A549 (cell line): ENCODE measurements at regions of chr16 and their contacts with region 1.

Region 1: DNA sequence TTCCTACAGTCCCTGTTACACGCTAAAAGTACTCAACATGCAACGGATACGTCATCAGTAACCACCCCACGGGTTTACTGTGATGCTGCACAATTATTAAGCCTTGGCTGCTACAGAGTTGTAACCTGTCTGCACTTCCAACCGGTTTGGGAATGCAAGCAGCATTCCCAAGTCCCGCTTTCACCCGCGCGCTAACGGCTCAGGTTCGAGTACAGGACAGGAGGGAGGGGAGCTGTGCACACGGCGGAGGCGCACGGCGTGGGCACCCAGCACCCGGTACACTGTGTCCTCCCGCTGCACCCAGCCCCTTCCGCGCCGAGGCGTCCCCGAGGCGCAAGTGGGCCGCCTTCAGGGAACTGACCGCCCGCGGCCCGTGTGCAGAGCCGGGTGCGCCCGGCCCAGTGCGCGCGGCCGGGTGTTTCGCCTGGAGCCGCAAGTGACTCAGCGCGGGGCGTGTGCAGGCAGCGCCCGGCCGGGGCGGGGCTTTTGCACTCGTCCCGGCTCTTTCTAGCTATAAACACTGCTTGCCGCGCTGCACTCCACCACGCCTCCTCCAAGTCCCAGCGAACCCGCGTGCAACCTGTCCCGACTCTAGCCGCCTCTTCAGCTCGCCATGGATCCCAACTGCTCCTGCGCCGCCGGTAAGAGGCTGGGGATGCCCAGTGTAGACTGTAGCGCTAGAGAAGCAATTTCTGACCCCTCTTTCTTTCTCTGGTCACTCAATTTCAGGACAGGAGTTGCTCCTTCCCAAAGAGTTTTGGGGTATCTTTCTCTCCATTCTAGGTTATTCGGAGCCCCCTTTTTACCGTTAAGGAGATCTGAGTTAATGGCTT is at the start of gene MT2A:
- DNase-seq: peak; percentile 92 to 97
- ATAC-seq: peak; percentile 67 to 83
- H3K4me3 ChIP-seq: peak within 1 kb of the TSS; percentile 61
- H3K27ac ChIP-seq: peak within 1 kb of the TSS; percentile 93 to 96
- H3K4me1 ChIP-seq: peaks cover 66% of the 10 kb centered on the region
- CTCF ChIP-seq: no peak
- EP300 ChIP-seq: no peak; a peak in 1 of 5 replicates
- POLR2A ChIP-seq: peak; percentile 66
- RAD21 ChIP-seq: peak in 1 of 2 experiments; percentile 26; a peak in 1 of 5 replicates
- polyA plus RNA-seq, gene MT2A: 39.1 and 69.4 TPM in 2 replicates

Region 2: DNA sequence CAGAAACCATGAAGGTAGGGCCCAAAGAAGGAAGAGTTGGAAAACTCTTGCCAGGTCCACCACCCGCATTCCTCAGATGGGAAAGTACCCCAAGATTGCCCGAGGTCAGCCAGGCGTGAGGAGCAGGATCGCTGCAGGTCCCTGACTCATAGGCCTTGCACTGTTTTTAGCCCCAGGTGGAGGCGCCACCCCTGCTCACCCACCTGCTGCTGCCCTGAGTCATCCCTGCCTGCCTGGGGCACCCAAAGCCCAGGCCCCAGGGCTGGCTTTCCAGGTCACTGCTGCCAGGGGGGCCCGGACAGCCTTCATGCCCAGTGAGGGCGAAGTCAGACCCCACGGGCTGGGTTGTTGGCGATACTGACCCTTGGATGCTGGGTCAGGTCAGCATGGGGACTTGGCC is 283.9 kb before region 1 on chr16:
- CTCF ChIA-PET with region 1: no interaction called
- POLR2A ChIA-PET with region 1: no interaction called
- DNase-seq: no peak
- ATAC-seq: no peak
- H3K4me3 ChIP-seq: no peak overlapping the region
- H3K27ac ChIP-seq: no peak overlapping the region
- H3K4me1 ChIP-seq: no peaks in the 10 kb centered on the region
- CTCF ChIP-seq: no peak
- EP300 ChIP-seq: no peak
- POLR2A ChIP-seq: no peak
- RAD21 ChIP-seq: no peak

Region 3: GRCh38 chr16:56625140-56625942 is 17.1 kb after region 1 on chr16 and contains the start of gene MT1E:
- CTCF ChIA-PET with region 1: interaction called, 7 read pairs
- POLR2A ChIA-PET with region 1: interaction called, 23 read pairs
- DNase-seq: no peak
- ATAC-seq: no peak
- H3K4me3 ChIP-seq: no peak within 1 kb of the TSS
- H3K27ac ChIP-seq: peak within 1 kb of the TSS; percentile 72 to 86
- H3K4me1 ChIP-seq: peaks cover 14% of the 10 kb centered on the region
- CTCF ChIP-seq: no peak
- EP300 ChIP-seq: no peak
- POLR2A ChIP-seq: no peak
- RAD21 ChIP-seq: no peak
- polyA plus RNA-seq, gene MT1E: not detected in 2 replicates

Region 4: DNA sequence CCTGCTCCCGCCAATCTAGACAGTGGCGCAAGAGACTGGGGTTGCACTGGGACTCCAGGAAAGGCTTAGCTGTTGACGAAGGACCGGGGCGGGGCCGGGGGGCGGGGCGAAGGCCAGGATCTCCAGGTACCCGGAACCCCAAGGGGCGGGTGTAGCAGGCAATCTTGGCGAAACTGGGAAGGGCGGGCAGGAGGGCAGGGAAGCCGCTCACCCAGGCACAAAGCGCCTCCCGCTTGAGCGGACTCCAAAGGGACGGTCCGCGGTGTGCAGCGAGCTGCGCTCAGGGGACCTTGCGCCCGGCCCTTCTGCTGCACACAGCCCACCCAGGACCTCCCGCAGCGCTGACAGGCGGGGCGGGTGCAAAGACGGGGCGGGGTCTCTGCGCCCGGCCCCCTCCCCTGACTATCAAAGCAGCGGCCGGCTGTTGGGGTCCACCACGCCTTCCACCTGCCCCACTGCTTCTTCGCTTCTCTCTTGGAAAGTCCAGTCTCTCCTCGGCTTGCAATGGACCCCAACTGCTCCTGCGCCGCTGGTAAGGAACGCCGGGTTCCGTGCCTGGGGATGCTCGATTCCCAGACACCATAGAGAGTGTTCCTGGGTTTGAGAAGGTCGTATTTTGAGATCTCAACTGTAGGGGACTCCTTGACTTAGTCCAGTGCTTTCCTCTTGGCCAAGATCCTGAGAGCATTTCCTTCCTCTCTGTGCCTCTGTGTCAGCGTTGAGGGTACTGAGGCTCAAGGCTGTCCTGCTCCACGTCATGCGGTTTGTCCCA is 49.5 kb after region 1 on chr16 and contains the start of gene MT1F:
- CTCF ChIA-PET with region 1: interaction called, 340 read pairs
- POLR2A ChIA-PET with region 1: interaction called, 16 read pairs
- DNase-seq: peak; percentile 75 to 78
- ATAC-seq: peak; percentile 93 to 94
- H3K4me3 ChIP-seq: peak within 1 kb of the TSS; percentile 56
- H3K27ac ChIP-seq: peak within 1 kb of the TSS; percentile 75 to 83
- H3K4me1 ChIP-seq: peaks cover 6% of the 10 kb centered on the region; the same call in 2 of the 3 replicates
- CTCF ChIP-seq: no peak
- EP300 ChIP-seq: no peak
- POLR2A ChIP-seq: 0 out of 2 replicates have a peak, but pooled peaks have one; percentile 15
- RAD21 ChIP-seq: no peak
- polyA plus RNA-seq, gene MT1F: 4.1 and 5.6 TPM in 2 replicates

Region 5: DNA sequence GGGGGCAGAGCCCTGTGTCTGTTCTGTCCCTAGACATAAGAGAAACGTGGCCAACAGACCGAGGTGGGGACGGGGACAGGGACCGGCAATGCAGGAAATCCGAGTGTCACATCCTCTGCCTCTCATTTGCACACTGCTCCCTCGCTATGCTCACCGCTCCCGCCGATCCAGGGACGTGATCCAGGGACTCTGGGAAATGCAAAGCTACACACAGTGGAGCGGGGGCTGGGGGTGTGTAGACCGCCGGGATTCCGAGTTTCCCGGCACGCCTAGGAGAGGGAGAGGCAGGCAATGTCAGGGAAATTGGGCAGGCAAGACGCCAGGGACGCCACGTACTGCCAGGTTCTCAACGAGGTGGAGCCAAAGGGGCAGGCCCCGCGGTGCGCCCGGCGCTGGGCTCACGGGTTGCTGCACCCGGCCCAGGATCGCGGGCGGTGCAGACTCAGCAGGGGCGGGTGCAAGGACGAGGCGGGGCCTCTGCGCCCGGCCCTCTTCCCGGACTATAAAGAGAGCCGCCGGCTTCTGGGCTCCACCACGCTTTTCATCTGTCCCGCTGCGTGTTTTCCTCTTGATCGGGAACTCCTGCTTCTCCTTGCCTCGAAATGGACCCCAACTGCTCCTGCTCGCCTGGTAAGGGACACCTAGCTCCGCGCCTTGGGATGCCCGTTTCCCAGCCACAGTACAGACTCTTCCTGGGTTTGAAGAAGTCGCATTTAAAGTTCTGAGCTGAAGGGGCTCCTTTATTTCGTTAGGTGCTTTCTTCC is 73.9 kb after region 1 on chr16 and contains the start of gene MT1X:
- CTCF ChIA-PET with region 1: interaction called, 7 read pairs
- POLR2A ChIA-PET with region 1: interaction called, 185 read pairs
- DNase-seq: peak; percentile 85 to 89
- ATAC-seq: peak; percentile 96 to 99
- H3K4me3 ChIP-seq: peak within 1 kb of the TSS; percentile 60
- H3K27ac ChIP-seq: peak within 1 kb of the TSS; percentile 84 to 85
- H3K4me1 ChIP-seq: peaks cover 9% of the 10 kb centered on the region; the same call in 2 of the 3 replicates
- CTCF ChIP-seq: no peak
- EP300 ChIP-seq: no peak
- POLR2A ChIP-seq: peak; percentile 75
- RAD21 ChIP-seq: no peak
- polyA plus RNA-seq, gene MT1X: 44.0 and 74.5 TPM in 2 replicates

Region 6: DNA sequence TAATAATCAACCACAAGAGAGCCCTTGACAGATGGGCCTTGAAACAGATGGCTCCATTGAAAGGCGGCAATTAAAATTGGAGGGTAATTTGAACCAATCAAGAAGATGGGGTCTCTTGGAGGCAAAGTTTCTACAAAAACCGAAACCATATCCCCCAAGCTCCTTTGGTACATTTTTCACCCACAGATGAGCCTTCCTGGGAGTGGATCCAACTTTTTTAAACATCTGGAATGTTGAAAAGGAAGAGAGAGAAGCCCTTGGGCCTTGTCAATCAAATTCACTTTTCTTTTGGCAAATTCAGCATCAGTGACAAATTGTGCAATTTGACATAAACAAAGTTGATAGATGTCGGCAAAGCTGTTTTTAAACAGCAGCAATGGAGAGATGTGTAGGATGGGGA is 108.5 kb after region 1 on chr16:
- CTCF ChIA-PET with region 1: no interaction called
- POLR2A ChIA-PET with region 1: no interaction called
- DNase-seq: no peak
- ATAC-seq: no peak
- H3K4me3 ChIP-seq: no peak overlapping the region
- H3K27ac ChIP-seq: no peak overlapping the region
- H3K4me1 ChIP-seq: no peaks in the 10 kb centered on the region
- CTCF ChIP-seq: no peak
- EP300 ChIP-seq: no peak
- POLR2A ChIP-seq: no peak
- RAD21 ChIP-seq: no peak

Region 7: DNA sequence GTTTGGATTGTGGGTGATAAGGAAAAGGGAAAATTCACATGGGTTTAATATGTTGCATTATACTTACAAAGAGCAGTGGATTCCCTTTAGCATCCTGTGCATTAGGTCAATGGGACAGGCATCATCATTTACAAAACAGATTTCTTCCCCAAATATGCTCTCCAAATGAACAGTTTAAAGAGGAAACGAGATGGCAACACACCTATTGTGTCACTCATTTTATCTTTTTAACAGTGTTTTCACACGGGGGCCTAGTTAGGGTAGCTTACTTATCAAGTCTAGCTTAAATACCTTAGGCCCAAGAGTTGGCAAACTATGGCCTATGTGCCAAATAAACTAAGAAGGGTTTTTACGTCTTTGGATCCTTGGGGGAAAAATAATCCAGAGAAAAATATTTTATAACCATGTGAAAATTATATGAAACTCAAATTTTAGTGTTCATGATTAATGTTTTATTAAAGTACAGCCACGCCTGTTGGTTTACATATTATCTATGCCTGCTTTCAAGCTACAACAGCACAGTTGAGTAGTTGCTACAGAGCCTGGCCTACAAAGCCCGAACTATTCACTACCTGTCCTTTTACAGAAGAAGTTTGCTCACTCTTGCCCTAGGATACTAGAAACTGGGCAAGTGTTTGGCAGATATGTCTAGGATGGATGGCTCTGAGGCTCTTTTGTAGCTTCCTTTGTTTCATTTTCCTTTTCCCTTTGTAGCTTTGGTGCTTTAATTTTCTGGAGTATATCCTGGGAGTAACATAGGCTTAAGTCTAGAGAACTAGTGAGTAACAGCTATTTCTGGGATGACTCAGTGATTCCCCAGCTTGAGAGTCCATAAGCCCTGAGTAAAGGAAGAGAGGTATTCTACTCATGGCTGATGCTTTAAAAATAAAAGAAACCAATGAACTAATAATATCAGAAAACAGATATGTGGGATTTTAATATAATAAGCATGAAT is 134.0 kb after region 1 on chr16:
- CTCF ChIA-PET with region 1: no interaction called
- POLR2A ChIA-PET with region 1: no interaction called
- DNase-seq: peak in 1 of 2 experiments; percentile 44
- ATAC-seq: peak; percentile 92 to 95
- H3K4me3 ChIP-seq: no peak overlapping the region
- H3K27ac ChIP-seq: peak overlapping the region; percentile 56 to 83
- H3K4me1 ChIP-seq: peaks cover 43% of the 10 kb centered on the region
- CTCF ChIP-seq: no peak
- EP300 ChIP-seq: no peak
- POLR2A ChIP-seq: no peak
- RAD21 ChIP-seq: no peak

Region 8: DNA sequence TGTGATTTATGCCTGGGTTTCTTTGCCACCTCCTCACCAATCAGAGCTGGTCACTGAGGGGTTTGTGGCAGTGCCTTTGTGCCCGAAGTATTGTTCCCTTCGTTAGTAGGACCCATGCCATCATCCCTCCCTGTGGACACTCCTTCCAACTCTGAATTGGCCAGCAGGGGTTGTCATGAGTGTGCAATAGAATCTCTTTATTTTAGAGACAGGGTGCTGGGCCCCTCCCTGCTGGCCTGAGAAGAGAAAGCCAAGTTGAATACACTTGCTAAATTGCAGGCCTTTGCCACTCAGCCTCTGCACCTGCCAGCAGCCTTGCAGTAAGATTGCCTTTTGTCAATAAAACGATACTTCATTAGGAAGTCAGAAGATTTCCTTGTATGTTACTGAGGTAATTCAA is 216.1 kb after region 1 on chr16:
- CTCF ChIA-PET with region 1: no interaction called
- POLR2A ChIA-PET with region 1: no interaction called
- DNase-seq: peak; percentile 30 to 39
- ATAC-seq: peak; percentile 93
- H3K4me3 ChIP-seq: no peak overlapping the region
- H3K27ac ChIP-seq: no peak overlapping the region
- H3K4me1 ChIP-seq: no peaks in the 10 kb centered on the region
- CTCF ChIP-seq: no peak
- EP300 ChIP-seq: no peak
- POLR2A ChIP-seq: no peak
- RAD21 ChIP-seq: 0 out of 5 replicates have a peak, but pooled peaks of 1 of the 2 experiments have one; percentile 13